ENCODE measurements at regions of chr5 and their contacts with region 1.

Region 1: GRCh38 chr5:109003928-109004327 is 256.2 kb downstream of the FER start:
- DNase-seq: no peak

Region 2: GRCh38 chr5:107058239-107058638 is 1945.7 kb before region 1 on chr5:
- intact Hi-C with region 1: loop called in 1 of 2 experiments (anchors 10 kb)
- DNase-seq: no peak

Region 3: DNA sequence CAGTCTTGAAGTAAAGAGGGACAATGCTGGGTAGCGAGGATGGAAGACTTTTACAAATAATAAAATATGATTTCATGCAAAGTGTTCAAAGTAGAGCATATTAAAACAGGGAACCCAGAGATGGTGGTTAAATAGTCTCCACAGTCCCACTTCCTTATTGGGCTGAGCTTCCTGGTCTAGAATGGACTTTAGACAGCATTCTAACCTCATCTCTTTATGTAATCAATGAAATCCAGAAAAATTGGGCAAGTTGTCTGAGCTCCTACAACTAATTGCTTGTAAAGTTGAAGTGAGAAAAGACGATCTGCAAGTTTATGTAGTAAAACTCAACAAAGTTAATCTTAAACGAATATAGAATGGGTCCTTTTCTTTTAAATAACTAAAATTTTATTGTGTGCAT is 77.0 kb after region 1 on chr5:
- intact Hi-C with region 1: no loop called
- DNase-seq: no peak